Activated CD4-positive, alpha-beta memory T cell treated with anti-CD3 and anti-CD28 coated beads for 36 hours (primary cell): ENCODE measurements at regions of chr2 and their contacts with region 1.

Region 1: GRCh38 chr2:26959331-26959730 is 11.1 kb upstream of the MAPRE3 start:
- DNase-seq: no peak
- H3K4me3 Mint-ChIP-seq: no peak overlapping the region
- H3K27ac Mint-ChIP-seq: no peak overlapping the region
- H3K4me1 Mint-ChIP-seq: no peaks in the 10 kb centered on the region
- H3K27me3 Mint-ChIP-seq: peaks cover 18% of the 10 kb centered on the region

Region 2: DNA sequence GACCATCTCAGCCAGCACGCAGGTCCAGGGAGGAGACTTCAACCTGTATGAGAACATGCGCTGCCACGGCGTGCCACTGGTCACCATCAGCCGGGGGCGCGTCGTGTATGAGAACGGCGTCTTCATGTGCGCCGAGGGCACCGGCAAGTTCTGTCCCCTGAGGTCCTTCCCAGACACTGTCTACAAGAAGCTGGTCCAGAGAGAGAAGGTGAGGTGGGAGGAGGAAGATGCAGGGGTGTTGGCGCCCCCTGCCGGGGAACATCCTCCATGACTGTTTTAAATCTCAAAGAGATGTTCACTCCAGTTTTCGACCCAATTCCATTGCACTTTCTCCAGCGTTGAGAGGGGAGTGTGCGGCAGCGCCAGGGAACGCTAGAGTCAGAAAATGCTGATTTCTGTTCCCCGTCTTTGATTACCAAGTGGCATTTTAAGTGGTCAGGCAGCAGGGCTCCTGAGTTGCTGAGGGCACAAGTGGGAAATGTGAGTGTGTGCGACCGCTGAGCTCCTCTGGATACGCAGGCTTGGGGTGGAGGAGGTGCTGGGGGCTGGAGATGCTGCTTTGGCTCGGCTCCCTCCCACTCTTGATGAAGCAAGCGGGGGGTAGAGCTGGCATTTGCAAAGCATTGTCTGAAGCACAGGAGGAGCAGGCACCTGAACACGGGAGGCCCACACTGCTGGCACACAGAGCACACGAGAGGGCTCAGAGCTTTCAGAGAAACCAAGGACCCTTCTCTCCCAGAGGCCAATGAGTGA is 16.6 kb before region 1 on chr2:
- CTCF ChIA-PET with region 1: interaction called, 11 read pairs
- POLR2A ChIA-PET with region 1: interaction called, 3 read pairs
- intact Hi-C with region 1: no loop called
- DNase-seq: peak; percentile 78
- H3K4me3 Mint-ChIP-seq: no peak overlapping the region
- H3K27ac Mint-ChIP-seq: no peak overlapping the region
- H3K4me1 Mint-ChIP-seq: peaks cover 2% of the 10 kb centered on the region
- H3K27me3 Mint-ChIP-seq: peaks cover 17% of the 10 kb centered on the region

Region 3: DNA sequence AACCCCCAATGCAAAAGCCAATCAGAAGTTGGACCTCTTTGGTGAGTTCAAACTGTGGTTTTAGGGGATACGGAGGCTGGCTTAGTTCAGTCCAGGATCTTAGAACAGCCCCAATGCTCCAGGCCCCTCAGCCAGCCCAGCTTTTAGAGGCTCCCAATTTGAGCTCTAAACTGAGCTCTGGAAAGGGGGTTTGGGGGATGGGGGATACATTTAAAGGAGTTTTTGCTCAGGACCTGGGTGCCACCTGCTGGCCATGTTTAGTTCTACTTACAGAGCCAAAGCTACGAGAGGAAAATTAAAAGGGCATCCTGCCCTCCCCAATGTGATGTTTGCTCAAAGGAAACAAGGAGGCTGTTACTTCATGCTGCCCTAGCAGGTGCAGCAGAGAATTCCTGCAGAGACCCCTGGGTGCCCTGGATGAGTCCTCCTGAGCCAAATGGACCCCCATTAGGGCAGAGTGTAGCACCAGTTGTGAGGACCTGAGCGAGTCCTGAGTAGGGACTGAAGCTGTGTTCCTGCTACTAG is 57.5 kb after region 1 on chr2:
- CTCF ChIA-PET with region 1: interaction called, 205 read pairs
- POLR2A ChIA-PET with region 1: no interaction called
- intact Hi-C with region 1: loop called (anchors 1 kb)
- DNase-seq: peak; percentile 54
- H3K4me3 Mint-ChIP-seq: no peak overlapping the region
- H3K27ac Mint-ChIP-seq: no peak overlapping the region
- H3K4me1 Mint-ChIP-seq: no peaks in the 10 kb centered on the region
- H3K27me3 Mint-ChIP-seq: no peaks in the 10 kb centered on the region

Region 4: DNA sequence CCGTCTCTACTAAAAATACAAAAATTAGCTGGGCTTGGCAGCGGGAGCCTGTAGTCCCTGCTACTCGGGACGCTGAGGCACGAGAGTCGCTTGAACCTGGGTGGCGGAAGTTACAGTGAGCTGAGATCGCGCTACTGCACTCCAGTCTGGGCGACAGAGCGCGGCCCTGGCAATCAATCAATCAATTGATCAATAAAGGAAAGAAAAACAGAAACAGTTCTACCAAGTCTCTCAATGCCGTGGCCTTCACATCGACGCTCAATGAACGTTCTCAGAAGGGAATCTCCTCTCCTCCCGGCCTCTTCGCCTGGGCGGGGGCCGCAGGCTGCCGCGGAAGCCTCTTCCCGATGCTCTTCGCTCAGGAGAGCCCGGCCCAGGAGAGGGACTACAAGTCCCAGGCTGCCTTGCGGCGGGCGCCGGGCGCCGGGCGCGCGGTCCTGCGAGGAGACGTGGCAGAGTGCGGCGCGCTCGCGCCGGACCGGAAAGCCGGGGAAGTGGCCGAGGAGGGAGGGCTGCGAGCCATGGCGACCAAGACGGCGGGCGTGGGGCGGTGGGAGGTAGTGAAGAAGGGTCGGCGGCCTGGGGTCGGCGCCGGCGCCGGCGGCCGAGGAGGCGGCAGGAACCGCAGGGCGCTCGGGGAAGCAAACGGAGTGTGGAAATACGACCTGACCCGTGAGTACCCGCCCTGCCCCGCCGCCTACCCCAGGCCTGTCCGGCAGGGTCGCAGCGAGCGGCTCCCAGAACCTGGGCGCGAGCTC is 73.3 kb after region 1 on chr2 and contains the start of gene TMEM214:
- CTCF ChIA-PET with region 1: interaction called, 15 read pairs
- POLR2A ChIA-PET with region 1: no interaction called
- intact Hi-C with region 1: no loop called
- DNase-seq: peak; percentile 89
- H3K4me3 Mint-ChIP-seq: peak within 1 kb of the TSS; percentile 93
- H3K27ac Mint-ChIP-seq: peak within 1 kb of the TSS; percentile 78
- H3K4me1 Mint-ChIP-seq: peaks cover 40% of the 10 kb centered on the region
- H3K27me3 Mint-ChIP-seq: no peaks in the 10 kb centered on the region
- total RNA-seq, gene TMEM214: 52.4 to 60.1 TPM

Region 5: DNA sequence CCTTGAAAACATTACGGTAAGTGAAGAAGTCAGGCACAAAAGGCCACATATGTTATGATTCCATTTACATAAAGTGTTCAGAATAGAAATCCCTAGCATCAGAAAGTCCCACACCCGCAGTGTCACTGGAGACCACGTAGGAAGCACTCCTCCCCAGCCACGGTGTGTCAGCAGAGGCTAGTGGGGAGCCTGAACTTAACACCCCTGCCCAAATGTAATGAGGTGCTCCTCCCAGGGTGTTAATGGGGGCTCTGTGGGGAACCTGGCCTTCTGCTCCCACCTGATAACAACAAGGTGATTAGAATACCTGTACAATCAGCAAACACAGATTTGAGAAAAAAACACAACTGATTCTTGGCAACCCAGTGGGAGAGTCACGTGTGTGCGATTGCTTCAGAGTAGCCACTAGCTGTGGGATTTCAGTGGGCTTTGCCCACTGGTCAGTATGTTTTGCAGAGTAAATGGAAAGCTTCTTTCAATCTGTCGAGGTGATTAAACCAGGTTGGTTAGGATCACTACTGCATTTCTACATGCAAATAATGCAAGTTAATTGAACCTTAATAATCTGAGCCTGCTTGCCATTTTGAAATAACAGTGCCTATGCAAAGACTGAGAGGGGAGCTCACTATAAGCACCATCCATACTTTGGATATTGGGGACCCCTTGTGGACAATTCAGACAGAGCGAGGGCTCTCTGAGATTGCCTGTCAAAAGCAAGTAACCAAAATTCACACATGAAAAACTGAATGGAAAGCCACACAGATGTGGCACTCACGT is 231.9 kb after region 1 on chr2:
- CTCF ChIA-PET with region 1: interaction called, 20 read pairs
- POLR2A ChIA-PET with region 1: no interaction called
- intact Hi-C with region 1: loop called (anchors 1 kb)
- DNase-seq: peak; percentile 52
- H3K4me3 Mint-ChIP-seq: no peak overlapping the region
- H3K27ac Mint-ChIP-seq: no peak overlapping the region
- H3K4me1 Mint-ChIP-seq: no peaks in the 10 kb centered on the region
- H3K27me3 Mint-ChIP-seq: no peaks in the 10 kb centered on the region

Region 6: DNA sequence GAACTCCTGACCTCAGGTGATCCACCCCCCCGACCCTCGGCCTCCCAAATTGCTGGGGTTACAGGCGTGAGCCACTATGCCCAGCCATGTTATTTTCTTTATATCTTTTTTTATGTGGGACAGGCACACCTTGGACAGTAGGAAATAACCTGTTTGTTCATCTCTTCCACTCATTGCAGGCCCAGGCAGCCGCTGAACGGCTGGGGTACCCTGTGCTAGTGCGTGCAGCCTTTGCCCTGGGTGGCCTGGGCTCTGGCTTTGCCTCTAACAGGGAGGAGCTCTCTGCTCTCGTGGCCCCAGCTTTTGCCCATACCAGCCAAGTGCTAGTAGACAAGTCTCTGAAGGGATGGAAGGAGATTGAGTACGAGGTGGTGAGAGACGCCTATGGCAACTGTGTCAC is 266.2 kb after region 1 on chr2:
- CTCF ChIA-PET with region 1: no interaction called
- POLR2A ChIA-PET with region 1: no interaction called
- intact Hi-C with region 1: no loop called
- DNase-seq: no peak
- H3K4me3 Mint-ChIP-seq: no peak overlapping the region
- H3K27ac Mint-ChIP-seq: no peak overlapping the region
- H3K4me1 Mint-ChIP-seq: peaks cover 5% of the 10 kb centered on the region
- H3K27me3 Mint-ChIP-seq: no peaks in the 10 kb centered on the region